ENCODE measurements at regions of chr7 and their contacts with region 1.

Region 1: GRCh38 chr7:23546897-23547572 is 15.3 kb upstream of the TRA2A start:
- DNase-seq: peak; percentile 86
- H3K4me3 Mint-ChIP-seq: no peak overlapping the region
- H3K27ac Mint-ChIP-seq: no peak overlapping the region
- H3K4me1 Mint-ChIP-seq: peaks cover 5% of the 10 kb centered on the region
- H3K27me3 Mint-ChIP-seq: no peaks in the 10 kb centered on the region

Region 2: DNA sequence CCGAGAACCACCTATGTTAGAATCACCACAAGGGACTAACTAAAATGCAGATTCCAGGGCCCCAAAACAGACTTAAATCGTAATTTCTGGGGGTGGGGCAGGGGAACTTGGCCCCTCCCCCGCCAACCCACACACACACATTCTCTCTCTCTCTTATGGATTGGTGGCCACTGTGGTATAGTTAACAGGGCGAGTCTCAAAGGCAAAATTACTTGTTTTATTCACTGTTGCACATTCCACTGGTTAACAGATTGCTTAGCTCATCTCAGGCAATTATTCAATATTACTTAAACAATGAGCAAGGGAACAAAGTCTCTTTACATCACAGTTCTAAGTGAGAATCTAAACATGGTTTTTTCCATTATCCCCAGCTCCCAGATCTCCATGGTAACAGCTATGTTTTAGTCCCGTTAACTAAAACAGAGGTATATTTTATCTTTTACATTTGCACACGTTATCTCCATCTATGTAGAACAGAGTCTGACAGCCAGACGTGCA is 115.3 kb before region 1 on chr7:
- CTCF ChIA-PET with region 1: interaction called, 5 read pairs
- intact Hi-C with region 1: loop called (anchors 1 kb)
- DNase-seq: no peak
- H3K4me3 Mint-ChIP-seq: no peak overlapping the region
- H3K27ac Mint-ChIP-seq: no peak overlapping the region
- H3K4me1 Mint-ChIP-seq: peaks cover 4% of the 10 kb centered on the region
- H3K27me3 Mint-ChIP-seq: peaks cover 23% of the 10 kb centered on the region

Region 3: DNA sequence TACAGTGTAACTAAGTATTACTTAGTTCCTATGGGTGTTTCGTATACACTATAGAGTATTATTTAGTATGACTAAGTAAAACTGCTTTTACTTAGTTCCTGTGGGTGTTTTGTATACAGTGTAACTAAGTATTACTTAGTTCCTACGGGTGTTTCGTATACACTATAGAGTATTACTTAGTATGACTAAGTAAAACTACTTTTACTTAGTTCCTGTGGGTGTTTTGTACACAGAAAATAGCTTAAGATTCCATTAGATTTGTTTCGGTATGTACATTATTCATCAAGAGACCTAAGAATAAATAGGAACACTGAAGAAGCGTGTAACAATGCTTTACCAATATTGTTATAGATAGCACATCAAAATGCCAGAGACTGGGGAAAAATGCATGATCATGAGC is 101.7 kb before region 1 on chr7:
- CTCF ChIA-PET with region 1: no interaction called
- intact Hi-C with region 1: no loop called
- DNase-seq: no peak
- H3K4me3 Mint-ChIP-seq: no peak overlapping the region
- H3K27ac Mint-ChIP-seq: no peak overlapping the region
- H3K4me1 Mint-ChIP-seq: no peaks in the 10 kb centered on the region
- H3K27me3 Mint-ChIP-seq: peaks cover 10% of the 10 kb centered on the region

Region 4: DNA sequence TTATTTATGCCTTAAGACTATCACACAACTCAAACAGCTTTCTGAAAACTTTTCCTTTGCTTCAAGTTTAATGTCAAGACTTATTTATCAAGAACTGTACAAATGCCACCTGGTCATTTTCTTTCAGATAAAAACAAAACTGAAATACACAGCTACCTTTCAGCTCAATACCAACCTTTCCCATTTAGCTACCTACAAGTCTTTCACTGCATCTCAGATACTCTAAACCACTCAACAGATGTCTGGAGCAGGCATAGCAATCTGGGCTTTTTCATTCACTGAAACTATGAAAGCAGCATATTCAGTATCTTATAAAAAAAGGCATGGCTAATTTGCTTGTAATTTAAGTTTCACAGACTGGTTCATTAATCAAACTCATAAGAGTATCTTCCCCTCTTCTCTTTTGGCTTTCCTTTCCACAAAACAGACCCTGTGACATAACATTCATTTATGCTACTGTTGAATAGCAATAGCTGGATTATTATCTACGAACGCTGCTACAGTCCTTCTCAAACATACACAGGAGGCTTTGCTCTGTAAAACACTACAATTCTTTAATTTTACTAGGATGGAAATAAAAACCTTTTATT is 23.5 kb before region 1 on chr7:
- CTCF ChIA-PET with region 1: interaction called, 13 read pairs
- intact Hi-C with region 1: no loop called
- DNase-seq: no peak
- H3K4me3 Mint-ChIP-seq: no peak overlapping the region
- H3K27ac Mint-ChIP-seq: no peak overlapping the region
- H3K4me1 Mint-ChIP-seq: peaks cover 57% of the 10 kb centered on the region
- H3K27me3 Mint-ChIP-seq: no peaks in the 10 kb centered on the region

Region 5: GRCh38 chr7:23570592-23571200 is 23.7 kb after region 1 on chr7:
- CTCF ChIA-PET with region 1: interaction called, 19 read pairs
- intact Hi-C with region 1: loop called (anchors 1 kb)
- DNase-seq: peak; percentile 84
- H3K4me3 Mint-ChIP-seq: no peak overlapping the region
- H3K27ac Mint-ChIP-seq: no peak overlapping the region
- H3K4me1 Mint-ChIP-seq: no peaks in the 10 kb centered on the region
- H3K27me3 Mint-ChIP-seq: peaks cover 5% of the 10 kb centered on the region

Region 6: DNA sequence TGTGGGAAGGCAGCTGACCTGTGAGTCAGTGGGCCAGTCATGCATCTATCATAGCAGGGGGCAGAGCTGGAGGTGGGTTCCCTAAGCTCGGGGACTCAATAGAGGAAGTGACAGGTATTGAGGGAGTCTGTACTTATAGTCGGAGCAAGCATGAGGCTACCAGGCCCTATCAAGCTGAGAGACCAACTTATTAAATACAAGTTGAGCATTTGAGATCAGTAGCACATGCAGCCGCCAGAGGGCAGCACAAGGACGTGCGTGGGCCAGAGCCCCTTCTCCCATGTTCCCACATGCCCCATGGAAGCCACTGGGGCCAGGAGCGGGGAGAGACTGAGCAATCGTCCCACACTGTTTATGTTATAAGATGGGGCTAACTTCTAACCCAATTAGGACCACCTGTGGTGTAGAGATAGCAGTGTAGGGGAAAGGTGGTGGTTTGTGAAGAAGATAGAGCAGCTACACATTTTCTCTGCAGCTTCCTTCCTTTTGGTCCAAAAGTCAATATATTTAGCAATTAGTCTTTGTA is 149.9 kb after region 1 on chr7:
- CTCF ChIA-PET with region 1: interaction called, 10 read pairs
- intact Hi-C with region 1: loop called (anchors 1 kb)
- DNase-seq: peak; percentile 67
- H3K4me3 Mint-ChIP-seq: no peak overlapping the region
- H3K27ac Mint-ChIP-seq: no peak overlapping the region
- H3K4me1 Mint-ChIP-seq: peaks cover 1% of the 10 kb centered on the region
- H3K27me3 Mint-ChIP-seq: no peaks in the 10 kb centered on the region

Region 7: GRCh38 chr7:23712368-23713284 is 165.6 kb after region 1 on chr7:
- CTCF ChIA-PET with region 1: interaction called, 15 read pairs
- intact Hi-C with region 1: loop called (anchors 1 kb)
- DNase-seq: no peak
- H3K4me3 Mint-ChIP-seq: no peak overlapping the region
- H3K27ac Mint-ChIP-seq: no peak overlapping the region
- H3K4me1 Mint-ChIP-seq: no peaks in the 10 kb centered on the region
- H3K27me3 Mint-ChIP-seq: peaks cover 2% of the 10 kb centered on the region

Region 8: DNA sequence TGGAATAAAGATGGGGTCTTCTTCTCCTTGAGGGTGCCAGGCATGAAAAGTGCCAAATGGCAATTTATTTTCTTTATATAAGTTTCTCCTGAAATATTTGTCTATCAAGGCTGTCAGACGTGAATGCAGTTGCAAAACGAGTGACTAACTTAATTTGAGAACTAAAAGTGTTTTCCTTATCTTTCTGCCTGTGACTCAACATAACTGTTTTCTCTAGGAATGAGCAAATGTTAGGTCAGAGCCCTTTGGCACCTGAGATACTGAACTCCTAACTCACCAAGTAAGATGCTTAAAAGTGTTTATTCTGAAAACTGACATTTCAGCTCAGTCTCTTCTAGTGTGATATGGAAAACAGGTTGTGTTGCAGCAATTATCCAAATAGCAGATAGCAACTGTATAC is 360.0 kb after region 1 on chr7:
- CTCF ChIA-PET with region 1: no interaction called
- intact Hi-C with region 1: no loop called
- DNase-seq: no peak
- H3K4me3 Mint-ChIP-seq: no peak overlapping the region
- H3K27ac Mint-ChIP-seq: no peak overlapping the region
- H3K4me1 Mint-ChIP-seq: no peaks in the 10 kb centered on the region
- H3K27me3 Mint-ChIP-seq: peaks cover 19% of the 10 kb centered on the region

Region 9: GRCh38 chr7:24283897-24284698 is 737.1 kb after region 1 on chr7 and contains the start of gene NPY:
- CTCF ChIA-PET with region 1: no interaction called
- intact Hi-C with region 1: loop called (anchors 10 kb)
- DNase-seq: peak; percentile 14
- H3K4me3 Mint-ChIP-seq: peak within 1 kb of the TSS; percentile 70
- H3K27ac Mint-ChIP-seq: no peak within 1 kb of the TSS
- H3K4me1 Mint-ChIP-seq: peaks cover 18% of the 10 kb centered on the region
- H3K27me3 Mint-ChIP-seq: peaks cover 44% of the 10 kb centered on the region
- total RNA-seq, gene NPY: not detected

Measured in activated naive CD4-positive, alpha-beta T cell treated with anti-CD3 and anti-CD28 coated beads for 36 hours (primary cell).